Sigmoid colon (tissue), 7 donors: ENCODE measurements at regions of chr14 and their contacts with region 1.

Region 1: DNA sequence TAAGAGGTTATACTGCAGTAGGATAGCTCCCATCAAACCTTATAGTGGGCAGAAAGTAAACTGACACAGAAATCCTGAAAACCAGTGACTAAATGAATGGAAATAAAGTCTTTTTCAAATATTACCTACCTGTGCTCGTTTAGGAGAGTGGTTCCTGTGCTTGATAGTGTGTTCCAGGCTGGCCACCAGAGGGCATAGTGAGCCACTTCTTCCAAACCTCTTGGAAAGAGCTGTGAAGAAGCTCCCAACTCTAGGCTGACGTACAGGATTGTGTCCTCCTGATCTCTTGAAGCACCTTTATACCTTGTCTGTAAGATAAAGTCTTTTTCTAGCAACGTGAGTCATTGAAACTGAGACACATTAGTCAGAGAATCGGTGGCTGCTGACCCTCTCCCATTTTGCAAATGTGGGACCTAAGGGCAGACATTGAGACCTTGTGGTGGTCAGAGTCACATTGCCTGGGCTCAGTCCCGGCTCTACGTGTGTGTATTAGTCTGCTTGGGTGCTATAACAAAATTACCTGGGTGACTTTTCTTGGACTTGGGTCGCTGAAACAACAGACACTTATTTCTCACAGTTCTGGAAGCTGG is 17.6 kb downstream of the TDP1 start:
- DNase-seq: peak; percentile 80
- H3K4me3 ChIP-seq: no peak overlapping the region
- H3K27ac ChIP-seq: no peak overlapping the region
- H3K4me1 ChIP-seq: no peaks in the 10 kb centered on the region
- H3K27me3 ChIP-seq: no peaks in the 10 kb centered on the region
- CTCF ChIP-seq: peak; percentile 18 to 82 (median 62)
- EP300 ChIP-seq: no peak
- POLR2A ChIP-seq: no peak

Region 2: GRCh38 chr14:89060191-89060590 is 913.1 kb before region 1 on chr14:
- intact Hi-C with region 1: no loop called
- DNase-seq: no peak
- H3K4me3 ChIP-seq: no peak overlapping the region
- H3K27ac ChIP-seq: no peak overlapping the region
- H3K4me1 ChIP-seq: no peaks in the 10 kb centered on the region
- H3K27me3 ChIP-seq: no peaks in the 10 kb centered on the region
- CTCF ChIP-seq: no peak
- EP300 ChIP-seq: no peak
- POLR2A ChIP-seq: no peak

Region 3: GRCh38 chr14:90019824-90020523 is 46.6 kb after region 1 on chr14:
- intact Hi-C with region 1: no loop called
- DNase-seq: no peak
- H3K4me3 ChIP-seq: no peak overlapping the region
- H3K27ac ChIP-seq: no peak overlapping the region
- H3K4me1 ChIP-seq: no peaks in the 10 kb centered on the region
- H3K27me3 ChIP-seq: no peaks in the 10 kb centered on the region
- CTCF ChIP-seq: no peak
- EP300 ChIP-seq: no peak
- POLR2A ChIP-seq: no peak

Region 4: GRCh38 chr14:90114550-90114949 is 141.2 kb after region 1 on chr14:
- intact Hi-C with region 1: no loop called
- DNase-seq: no peak
- H3K4me3 ChIP-seq: no peak overlapping the region
- H3K27ac ChIP-seq: no peak overlapping the region
- H3K4me1 ChIP-seq: no peaks in the 10 kb centered on the region
- H3K27me3 ChIP-seq: peaks cover 0 to 4% (median 0%) of the 10 kb centered on the region in 3 donors
- CTCF ChIP-seq: no peak
- EP300 ChIP-seq: no peak
- POLR2A ChIP-seq: no peak

Region 5: DNA sequence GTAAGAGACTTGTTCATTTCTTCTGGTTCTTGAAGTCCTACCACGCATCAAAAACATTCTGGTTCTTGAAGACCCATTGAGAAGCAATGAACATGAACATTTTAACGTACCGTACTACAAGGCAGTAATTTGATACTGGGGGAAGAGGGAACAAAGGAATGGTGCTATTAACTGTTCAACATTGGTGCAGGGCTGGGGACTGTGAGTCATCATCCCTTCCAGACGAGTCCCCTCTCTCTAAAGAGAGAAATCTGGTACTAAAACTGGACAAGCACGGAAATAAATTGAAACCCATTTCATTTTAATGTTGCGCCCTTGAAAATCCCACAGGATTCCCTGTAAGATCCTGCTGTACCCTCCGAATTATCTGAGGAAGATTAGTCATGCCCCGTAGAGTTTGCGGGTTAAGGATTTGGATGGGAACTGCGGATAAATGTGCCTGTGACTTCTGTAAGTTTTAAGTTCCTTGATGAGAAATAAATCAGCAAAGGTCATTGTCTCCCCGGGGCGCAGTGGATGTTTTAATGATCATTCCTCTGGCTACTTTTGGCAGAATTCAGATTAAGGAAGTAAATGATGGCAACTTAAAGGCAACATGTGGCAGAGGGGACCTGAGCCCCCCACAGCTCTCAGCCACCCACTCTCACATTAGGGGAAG is 167.1 kb after region 1 on chr14:
- intact Hi-C with region 1: no loop called
- DNase-seq: no peak
- H3K4me3 ChIP-seq: no peak overlapping the region
- H3K27ac ChIP-seq: no peak overlapping the region
- H3K4me1 ChIP-seq: no peaks in the 10 kb centered on the region
- H3K27me3 ChIP-seq: peaks cover 0 to 5% (median 0%) of the 10 kb centered on the region in 3 donors
- CTCF ChIP-seq: no peak
- EP300 ChIP-seq: no peak
- POLR2A ChIP-seq: no peak

Region 6: GRCh38 chr14:90235179-90235976 is 262.0 kb after region 1 on chr14:
- intact Hi-C with region 1: loop called (anchors 2 kb)
- DNase-seq: no peak
- H3K4me3 ChIP-seq: no peak overlapping the region
- H3K27ac ChIP-seq: no peak overlapping the region
- H3K4me1 ChIP-seq: peaks cover 0 to 8% (median 2%) of the 10 kb centered on the region in 4 donors
- H3K27me3 ChIP-seq: peaks cover 0 to 11% (median 0%) of the 10 kb centered on the region in 3 donors
- CTCF ChIP-seq: peak; percentile 47 to 87 (median 80)
- EP300 ChIP-seq: no peak
- POLR2A ChIP-seq: no peak

Region 7: DNA sequence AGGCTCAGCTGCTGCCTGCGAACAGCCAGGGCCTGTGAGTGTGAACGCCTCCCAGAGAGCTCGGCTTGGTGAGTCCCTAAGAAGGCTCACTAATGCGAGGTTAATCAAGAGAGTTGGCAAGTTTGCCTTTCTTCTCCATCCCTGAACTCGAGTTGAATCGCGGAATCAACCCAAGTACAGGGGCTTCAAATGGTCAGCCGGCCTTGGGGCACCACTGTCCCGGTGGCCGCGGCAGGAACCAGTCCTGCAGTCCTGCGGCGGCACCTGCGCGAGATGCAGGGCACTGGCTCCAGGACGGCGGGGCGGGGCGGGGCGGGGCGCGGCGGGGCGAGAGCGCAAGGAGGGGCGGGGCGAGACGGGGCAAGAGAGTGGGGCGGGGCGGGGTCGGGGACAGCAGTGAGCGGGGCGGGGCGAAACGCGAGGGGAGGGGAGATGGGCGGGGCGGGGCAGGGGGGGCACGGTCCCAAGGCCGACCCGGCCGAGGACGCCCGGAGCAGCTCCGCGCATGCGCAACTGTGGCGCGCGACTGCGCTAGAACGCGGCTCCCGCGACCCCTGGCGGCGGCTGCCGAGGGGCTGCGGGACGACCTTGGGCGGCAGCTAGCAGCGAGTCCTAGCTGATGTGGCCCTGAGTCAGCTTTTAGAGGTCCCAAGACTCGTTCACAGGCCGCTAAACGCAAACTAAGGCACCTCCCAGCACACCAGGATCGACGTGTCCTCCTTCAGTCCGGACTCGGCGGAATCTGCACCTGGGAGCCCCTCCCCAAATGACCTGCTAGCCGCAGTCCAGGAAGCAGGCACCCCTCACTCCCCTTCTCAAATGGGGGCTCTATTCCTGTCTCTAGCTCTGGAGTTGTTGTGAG is 784.9 kb after region 1 on chr14:
- intact Hi-C with region 1: loop called (anchors 5 kb)
- DNase-seq: peak; percentile 95
- H3K4me3 ChIP-seq: peak overlapping the region; percentile 26 to 50 (median 46)
- H3K27ac ChIP-seq: peak overlapping the region; percentile 90 to 96 (median 92)
- H3K4me1 ChIP-seq: peaks cover 0 to 52% (median 36%) of the 10 kb centered on the region in 4 donors
- H3K27me3 ChIP-seq: no peaks in the 10 kb centered on the region
- CTCF ChIP-seq: peak; percentile 75 to 91 (median 85)
- EP300 ChIP-seq: no peak
- POLR2A ChIP-seq: peak in 1 of 2 donors; percentile 35